Right cardiac atrium (tissue), 5 donors: ENCODE measurements at regions of chr21 and their contacts with region 1.

Region 1: DNA sequence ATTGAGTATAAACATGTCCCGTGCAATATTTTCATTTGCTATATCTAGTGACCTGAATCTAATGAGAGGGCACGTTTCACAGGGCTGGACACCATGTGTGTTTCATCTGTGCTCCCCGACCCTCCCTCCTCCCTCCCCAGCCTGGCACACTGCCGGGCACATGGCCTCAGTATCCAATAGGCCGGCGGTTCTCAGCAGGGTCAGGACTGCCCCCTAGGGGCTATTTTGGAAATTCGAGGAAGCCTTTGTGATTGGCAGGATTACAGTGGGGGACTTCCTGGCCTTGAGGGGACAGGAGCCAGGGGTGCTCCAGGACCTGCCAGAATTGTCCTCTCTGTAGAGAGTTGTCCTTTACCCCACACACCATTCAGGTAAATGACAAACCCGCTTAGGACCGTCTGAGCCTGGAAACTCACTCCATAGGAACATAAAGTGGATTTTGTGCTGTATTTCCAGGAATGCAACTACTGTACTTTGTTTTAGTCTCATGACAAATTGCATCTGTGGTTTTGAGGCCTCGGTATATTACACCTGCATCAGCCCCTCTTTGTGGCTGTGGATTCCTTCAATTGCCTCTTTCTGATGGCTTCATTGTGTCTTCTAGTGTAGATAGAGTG is 109.5 kb upstream of the SIM2 start:
- DNase-seq: peak; percentile 41 to 75 (median 67)
- ATAC-seq: peak in 1 of 2 donors; percentile 77
- H3K4me3 ChIP-seq: no peak overlapping the region
- H3K27ac ChIP-seq: no peak overlapping the region
- H3K4me1 ChIP-seq: no peaks in the 10 kb centered on the region
- H3K27me3 ChIP-seq: no peaks in the 10 kb centered on the region

Region 2: DNA sequence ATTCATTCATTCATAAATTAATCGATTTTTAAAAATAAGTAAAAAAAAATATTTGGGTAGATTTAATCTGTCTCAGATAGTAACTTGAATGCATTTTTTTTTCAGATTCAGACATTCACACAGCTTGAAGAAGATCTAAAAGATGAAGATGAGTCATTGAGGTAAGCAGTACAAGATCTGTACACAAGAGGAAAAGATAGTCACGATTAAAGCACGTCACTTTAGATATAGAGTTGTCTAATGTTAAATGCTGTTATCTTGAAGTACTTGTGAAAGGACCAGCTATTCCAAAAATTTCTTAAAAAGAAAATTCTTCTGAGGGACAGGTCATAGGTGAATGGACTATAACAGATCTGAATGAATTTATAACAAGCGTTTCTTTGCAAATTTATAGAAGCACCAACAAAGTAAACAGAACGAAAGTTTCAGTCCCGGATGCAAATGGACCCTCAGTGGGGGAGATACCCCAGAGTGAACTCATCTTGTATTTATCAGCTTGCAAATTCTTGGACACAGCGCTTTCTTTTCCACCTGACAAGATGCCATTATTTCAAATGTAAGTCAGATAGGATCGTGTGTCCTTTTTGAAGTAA is 300.7 kb before region 1 on chr21:
- intact Hi-C with region 1: no loop called
- DNase-seq: no peak
- ATAC-seq: no peak
- H3K4me3 ChIP-seq: no peak overlapping the region
- H3K27ac ChIP-seq: no peak overlapping the region
- H3K4me1 ChIP-seq: no peaks in the 10 kb centered on the region
- H3K27me3 ChIP-seq: no peaks in the 10 kb centered on the region

Region 3: DNA sequence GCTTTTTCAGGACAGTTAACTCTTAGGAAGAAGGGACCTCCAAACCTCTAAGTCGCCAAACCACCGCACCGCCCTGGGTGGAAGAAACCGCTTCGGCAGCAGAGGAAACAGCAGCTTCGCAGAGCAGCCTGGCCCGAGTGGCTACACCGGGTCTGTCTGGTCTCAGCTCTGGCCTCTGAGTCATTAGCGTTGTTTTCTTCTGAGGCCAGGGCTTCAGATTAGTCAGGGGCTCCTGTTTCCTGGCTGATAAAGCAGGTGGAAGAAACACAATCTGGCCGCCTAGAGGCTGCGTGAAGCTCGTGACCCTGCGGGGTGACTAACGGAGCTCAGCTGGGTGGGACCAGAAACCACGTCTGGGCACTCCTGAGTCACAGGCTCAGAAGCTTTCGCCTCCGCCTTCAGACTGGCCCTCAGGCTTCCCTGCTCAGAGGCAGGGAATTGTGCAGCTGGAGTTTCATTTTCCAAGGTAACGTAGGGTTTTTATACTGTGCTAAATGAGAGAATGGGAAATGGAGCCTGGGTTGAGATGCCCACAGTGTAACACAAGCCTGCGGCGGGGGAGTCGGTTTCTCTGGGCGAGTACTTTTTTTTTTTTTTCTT is 159.4 kb before region 1 on chr21:
- intact Hi-C with region 1: loop called in 1 of 4 experiments (anchors 10 kb)
- DNase-seq: peak; percentile 86 to 90 (median 87)
- ATAC-seq: peak; percentile 93 to 97
- H3K4me3 ChIP-seq: no peak overlapping the region
- H3K27ac ChIP-seq: peak overlapping the region; percentile 26
- H3K4me1 ChIP-seq: no peaks in the 10 kb centered on the region
- H3K27me3 ChIP-seq: no peaks in the 10 kb centered on the region

Region 4: DNA sequence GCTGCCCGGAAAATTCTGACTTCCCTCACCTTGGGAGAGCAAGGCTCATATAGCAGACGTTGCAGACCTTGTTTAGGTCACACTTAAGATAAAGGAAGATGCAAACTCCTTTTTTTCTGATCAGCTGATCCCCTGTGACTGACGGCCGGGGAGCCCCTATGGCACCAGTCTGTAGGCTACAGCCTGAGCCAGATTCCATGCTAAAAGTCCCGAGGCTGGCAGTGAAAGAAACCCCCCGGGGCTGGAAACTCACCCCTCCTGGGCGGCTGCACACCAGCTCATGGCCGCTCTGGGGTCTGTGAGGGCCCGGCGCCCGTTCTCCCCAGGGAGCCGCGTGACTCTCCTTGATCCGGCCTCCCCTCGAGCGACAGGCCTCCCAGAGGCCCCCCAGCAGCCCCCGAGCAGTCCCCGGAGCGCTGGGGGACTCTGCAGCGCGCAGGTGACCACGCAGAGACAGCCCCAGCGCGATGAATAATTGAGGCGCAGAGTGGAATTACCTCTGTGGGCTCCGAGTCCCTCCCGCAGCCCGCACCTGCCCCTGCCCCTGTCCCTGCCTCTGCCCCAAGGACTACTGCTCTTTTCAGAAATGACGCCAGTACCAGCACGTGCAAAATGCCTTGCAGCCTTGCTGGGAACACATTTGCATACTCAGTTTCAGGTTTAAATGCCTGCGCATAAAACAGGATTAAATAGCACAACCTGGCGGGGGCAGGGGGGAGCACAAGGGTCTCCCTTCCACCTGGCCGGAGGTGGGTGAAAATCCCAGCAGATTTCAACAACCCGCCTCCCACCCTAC is 47.0 kb before region 1 on chr21:
- intact Hi-C with region 1: loop called in 1 of 4 experiments (anchors 10 kb)
- DNase-seq: no peak
- ATAC-seq: no peak
- H3K4me3 ChIP-seq: no peak overlapping the region
- H3K27ac ChIP-seq: no peak overlapping the region
- H3K4me1 ChIP-seq: no peaks in the 10 kb centered on the region
- H3K27me3 ChIP-seq: peaks cover 3% of the 10 kb centered on the region

Region 5: DNA sequence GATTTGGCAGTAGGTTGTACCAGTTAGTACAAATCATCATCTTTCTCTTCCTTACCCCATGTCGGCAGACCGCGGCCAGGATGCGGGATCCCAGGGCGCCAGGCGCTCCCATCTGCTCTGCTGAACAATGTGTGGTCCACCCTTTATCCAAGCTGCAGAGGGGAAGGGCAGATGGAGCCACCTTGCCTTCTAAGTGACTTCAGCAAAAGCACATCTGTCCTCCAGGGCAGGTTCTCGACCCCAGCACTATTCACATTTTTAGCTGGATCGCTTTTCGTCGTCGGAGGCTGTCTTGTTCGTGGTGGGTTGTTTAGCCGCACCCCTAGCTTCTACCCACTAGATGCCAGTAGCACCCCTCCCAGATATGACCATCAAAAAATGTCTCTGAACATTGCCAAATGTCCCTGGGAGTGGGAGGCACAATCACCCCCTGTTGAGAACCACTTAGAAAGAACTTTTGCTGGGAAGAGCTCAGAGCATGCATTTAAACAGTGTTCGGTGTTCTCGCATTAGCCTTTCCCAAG is 51.3 kb after region 1 on chr21:
- intact Hi-C with region 1: no loop called
- DNase-seq: no peak
- ATAC-seq: no peak
- H3K4me3 ChIP-seq: no peak overlapping the region
- H3K27ac ChIP-seq: no peak overlapping the region
- H3K4me1 ChIP-seq: no peaks in the 10 kb centered on the region
- H3K27me3 ChIP-seq: no peaks in the 10 kb centered on the region